B cell (primary cell): ENCODE measurements at regions of chr19 and their contacts with region 1.

Region 1: DNA sequence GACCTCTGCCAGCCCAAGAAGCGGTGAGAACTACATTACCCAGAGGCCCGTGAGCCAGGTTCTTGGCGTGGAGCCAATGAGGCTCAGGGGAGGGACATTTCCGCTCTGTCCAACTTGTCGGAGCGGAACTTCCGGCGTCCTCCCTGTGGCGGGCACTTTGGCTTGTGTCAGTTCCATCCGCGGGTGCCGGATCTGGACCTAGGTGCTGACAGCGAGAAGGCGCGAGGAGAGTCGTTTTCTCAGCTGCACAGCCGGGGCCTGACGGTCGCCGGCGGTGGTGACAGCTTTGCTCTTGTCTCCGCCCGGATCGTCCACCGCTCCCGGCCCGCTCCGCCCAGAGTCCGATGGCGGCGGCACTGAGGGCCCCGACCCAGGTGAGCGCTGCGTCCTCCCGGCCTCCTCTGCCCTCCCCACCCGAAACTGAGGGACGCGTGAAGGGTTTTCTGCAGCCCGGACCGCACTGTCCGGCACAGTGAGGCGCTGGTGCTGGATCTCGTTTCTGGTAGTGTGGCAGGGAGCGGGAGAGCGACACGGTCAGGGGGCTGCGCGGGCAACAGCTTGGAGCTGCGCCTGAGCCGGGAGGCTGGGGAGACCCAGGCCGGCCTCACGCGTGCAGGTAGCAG is at the start of gene ZNF530:
- DNase-seq: peak; percentile 88
- ATAC-seq: peak; percentile 99
- H3K4me3 ChIP-seq: peak within 1 kb of the TSS; percentile 44 to 81 (median 77)
- H3K4me3 Mint-ChIP-seq: peak within 1 kb of the TSS; percentile 90
- H3K27ac ChIP-seq: peak within 1 kb of the TSS in 1 of 2 donors; percentile 52
- H3K27ac Mint-ChIP-seq: peak within 1 kb of the TSS; percentile 79
- H3K4me1 ChIP-seq: peaks cover 11 to 14% of the 10 kb centered on the region in 2 donors
- H3K4me1 Mint-ChIP-seq: peaks cover 20% of the 10 kb centered on the region
- H3K27me3 ChIP-seq: no peaks in the 10 kb centered on the region
- H3K27me3 Mint-ChIP-seq: peaks cover 3% of the 10 kb centered on the region
- CTCF ChIP-seq: no peak
- total RNA-seq, gene ZNF530: 11.2 and 11.6 TPM in 2 replicates

Region 2: GRCh38 chr19:57572415-57572947 is 27.4 kb before region 1 on chr19:
- CTCF ChIA-PET with region 1: no interaction called
- POLR2A ChIA-PET with region 1: no interaction called
- intact Hi-C with region 1: no loop called
- DNase-seq: no peak
- ATAC-seq: no peak
- H3K4me3 ChIP-seq: no peak overlapping the region
- H3K4me3 Mint-ChIP-seq: no peak overlapping the region
- H3K27ac ChIP-seq: no peak overlapping the region
- H3K27ac Mint-ChIP-seq: no peak overlapping the region
- H3K4me1 ChIP-seq: peaks cover 1 to 3% of the 10 kb centered on the region in 2 donors
- H3K4me1 Mint-ChIP-seq: peaks cover 9% of the 10 kb centered on the region
- H3K27me3 ChIP-seq: no peaks in the 10 kb centered on the region
- H3K27me3 Mint-ChIP-seq: no peaks in the 10 kb centered on the region
- CTCF ChIP-seq: no peak

Region 3: GRCh38 chr19:57613941-57614743 is 14.3 kb after region 1 on chr19 and contains the start of gene ZNF134:
- CTCF ChIA-PET with region 1: interaction called, 3 read pairs
- POLR2A ChIA-PET with region 1: no interaction called
- intact Hi-C with region 1: loop called (anchors 1 kb)
- DNase-seq: peak; percentile 94
- ATAC-seq: peak; percentile 99
- H3K4me3 ChIP-seq: peak within 1 kb of the TSS; percentile 45 to 97 (median 92)
- H3K4me3 Mint-ChIP-seq: peak within 1 kb of the TSS; percentile 93
- H3K27ac ChIP-seq: peak within 1 kb of the TSS; percentile 42 to 81
- H3K27ac Mint-ChIP-seq: peak within 1 kb of the TSS; percentile 90
- H3K4me1 ChIP-seq: peaks cover 14 to 21% of the 10 kb centered on the region in 2 donors
- H3K4me1 Mint-ChIP-seq: peaks cover 40% of the 10 kb centered on the region
- H3K27me3 ChIP-seq: no peaks in the 10 kb centered on the region
- H3K27me3 Mint-ChIP-seq: no peaks in the 10 kb centered on the region
- CTCF ChIP-seq: peak; percentile 34
- total RNA-seq, gene ZNF134: 38.1 and 38.9 TPM in 2 replicates

Region 4: DNA sequence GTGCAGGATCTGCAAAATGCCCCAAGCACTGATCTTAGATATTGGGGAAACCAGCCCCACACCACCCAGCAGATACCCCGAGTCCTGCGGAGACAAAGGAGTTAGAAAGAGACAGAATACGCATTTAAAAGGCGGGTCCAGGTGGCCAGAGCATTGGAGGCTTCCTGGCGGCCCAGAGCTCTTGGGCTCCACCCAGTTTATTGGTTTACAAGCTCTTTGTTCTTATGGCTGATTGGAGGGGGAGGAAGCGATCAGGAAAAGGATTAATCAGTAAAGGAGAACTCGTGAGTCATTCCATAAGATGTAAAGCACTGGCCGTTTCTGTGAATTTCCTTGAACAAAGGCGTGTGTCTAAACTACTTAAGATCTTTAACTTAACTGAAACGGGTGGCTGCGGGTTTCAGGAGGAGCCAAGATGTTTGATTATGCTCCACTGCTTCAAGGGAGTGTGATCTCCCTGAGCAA is 250.7 kb after region 1 on chr19:
- CTCF ChIA-PET with region 1: no interaction called
- POLR2A ChIA-PET with region 1: no interaction called
- intact Hi-C with region 1: loop called (anchors 5 kb)
- DNase-seq: peak; percentile 19
- ATAC-seq: no peak
- H3K4me3 ChIP-seq: peak overlapping the region; percentile 26 to 95 (median 76)
- H3K4me3 Mint-ChIP-seq: peak overlapping the region; percentile 97
- H3K27ac ChIP-seq: peak overlapping the region in 1 of 2 donors; percentile 93
- H3K27ac Mint-ChIP-seq: peak overlapping the region; percentile 94
- H3K4me1 ChIP-seq: peaks cover 7 to 16% of the 10 kb centered on the region in 2 donors
- H3K4me1 Mint-ChIP-seq: peaks cover 22% of the 10 kb centered on the region
- H3K27me3 ChIP-seq: no peaks in the 10 kb centered on the region
- H3K27me3 Mint-ChIP-seq: no peaks in the 10 kb centered on the region
- CTCF ChIP-seq: no peak